CD14-positive monocyte (primary cell): ENCODE measurements at regions of chr12 and their contacts with region 1.

Region 1: GRCh38 chr12:107317751-107318613 is 224.6 kb upstream of the CRY1 start:
- DNase-seq: peak; percentile 87 to 92 (median 88)
- H3K4me3 ChIP-seq: peak overlapping the region; percentile 70 to 85 (median 81)
- H3K4me3 Mint-ChIP-seq: peak overlapping the region; percentile 89 to 95
- H3K27ac ChIP-seq: no peak overlapping the region
- H3K27ac Mint-ChIP-seq: peak overlapping the region in 6 of 7 donors; percentile 16 to 87 (median 62)
- H3K4me1 ChIP-seq: peaks cover 50 to 60% of the 10 kb centered on the region in 2 donors
- H3K4me1 Mint-ChIP-seq: peaks cover 42% of the 10 kb centered on the region
- H3K27me3 ChIP-seq: peaks cover 0 to 14% of the 10 kb centered on the region in 2 donors
- H3K27me3 Mint-ChIP-seq: peaks cover 28 to 40% (median 29%) of the 10 kb centered on the region in 3 donors
- CTCF ChIP-seq: peak; percentile 59

Region 2: GRCh38 chr12:107254258-107254856 is 63.6 kb before region 1 on chr12:
- intact Hi-C with region 1: no loop called
- DNase-seq: no peak
- H3K4me3 ChIP-seq: no peak overlapping the region
- H3K4me3 Mint-ChIP-seq: no peak overlapping the region
- H3K27ac ChIP-seq: no peak overlapping the region
- H3K27ac Mint-ChIP-seq: no peak overlapping the region
- H3K4me1 ChIP-seq: no peaks in the 10 kb centered on the region
- H3K4me1 Mint-ChIP-seq: no peaks in the 10 kb centered on the region
- H3K27me3 ChIP-seq: no peaks in the 10 kb centered on the region
- H3K27me3 Mint-ChIP-seq: peaks cover 0 to 6% (median 3%) of the 10 kb centered on the region in 3 donors
- CTCF ChIP-seq: no peak

Region 3: GRCh38 chr12:107264667-107265066 is 53.3 kb before region 1 on chr12:
- intact Hi-C with region 1: no loop called
- DNase-seq: no peak
- H3K4me3 ChIP-seq: no peak overlapping the region
- H3K4me3 Mint-ChIP-seq: no peak overlapping the region
- H3K27ac ChIP-seq: no peak overlapping the region
- H3K27ac Mint-ChIP-seq: no peak overlapping the region
- H3K4me1 ChIP-seq: no peaks in the 10 kb centered on the region
- H3K4me1 Mint-ChIP-seq: no peaks in the 10 kb centered on the region
- H3K27me3 ChIP-seq: no peaks in the 10 kb centered on the region
- H3K27me3 Mint-ChIP-seq: peaks cover 0 to 2% (median 1%) of the 10 kb centered on the region in 3 donors
- CTCF ChIP-seq: no peak

Region 4: DNA sequence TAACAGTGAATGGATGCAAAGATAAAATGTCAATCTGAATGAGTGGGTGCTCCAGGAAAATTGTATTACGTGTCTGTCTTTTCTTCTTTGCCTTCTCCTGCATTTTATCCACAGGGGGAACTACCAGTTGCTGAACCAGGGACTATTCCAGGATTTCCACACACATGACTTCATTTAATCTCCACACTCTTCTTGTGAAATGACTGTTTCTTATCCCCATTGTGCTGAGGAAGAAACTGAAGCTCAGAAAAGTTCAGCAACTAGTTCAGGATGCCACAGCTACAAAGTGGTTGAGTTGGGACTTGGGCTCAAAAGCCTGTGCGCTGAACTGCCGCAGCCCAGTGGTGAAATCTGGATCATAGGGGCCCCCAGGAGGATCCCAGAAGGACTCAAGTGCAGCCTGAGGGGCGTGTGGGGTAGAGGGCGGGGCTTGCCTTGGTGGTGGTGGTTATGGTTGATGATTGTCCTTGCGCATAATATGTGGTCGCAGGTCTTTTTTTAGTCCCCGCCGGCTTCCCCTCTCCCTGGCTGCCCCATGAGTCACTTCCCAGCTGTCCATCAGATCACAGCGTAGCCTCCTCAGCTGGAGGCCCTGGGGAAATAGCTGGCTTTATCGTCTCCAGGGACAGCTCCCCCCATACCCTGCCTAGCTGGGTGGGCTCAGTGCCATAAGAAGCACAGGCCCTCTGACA is 10.6 kb after region 1 on chr12:
- intact Hi-C with region 1: loop called in 1 of 2 experiments (anchors 1 kb)
- DNase-seq: peak; percentile 84 to 92 (median 85)
- H3K4me3 ChIP-seq: peak overlapping the region in 1 of 3 experiments; percentile 44
- H3K4me3 Mint-ChIP-seq: peak overlapping the region; percentile 34 to 42
- H3K27ac ChIP-seq: peak overlapping the region in 1 of 2 donors; percentile 62
- H3K27ac Mint-ChIP-seq: peak overlapping the region; percentile 72 to 93 (median 88)
- H3K4me1 ChIP-seq: peaks cover 30 to 44% of the 10 kb centered on the region in 2 donors
- H3K4me1 Mint-ChIP-seq: peaks cover 70% of the 10 kb centered on the region
- H3K27me3 ChIP-seq: peaks cover 0 to 3% of the 10 kb centered on the region in 2 donors
- H3K27me3 Mint-ChIP-seq: peaks cover 0 to 5% (median 4%) of the 10 kb centered on the region in 3 donors
- CTCF ChIP-seq: no peak

Region 5: GRCh38 chr12:107372229-107372658 is 54.3 kb after region 1 on chr12:
- intact Hi-C with region 1: loop called in 1 of 2 experiments (anchors 2 kb)
- DNase-seq: peak; percentile 47 to 79 (median 54)
- H3K4me3 ChIP-seq: peak overlapping the region in 1 of 3 experiments; percentile 11
- H3K4me3 Mint-ChIP-seq: peak overlapping the region; percentile 43 to 66
- H3K27ac ChIP-seq: peak overlapping the region; percentile 10 to 26
- H3K27ac Mint-ChIP-seq: peak overlapping the region in 6 of 7 donors; percentile 55 to 88 (median 60)
- H3K4me1 ChIP-seq: peaks cover 66 to 69% of the 10 kb centered on the region in 2 donors
- H3K4me1 Mint-ChIP-seq: peaks cover 65% of the 10 kb centered on the region
- H3K27me3 ChIP-seq: no peaks in the 10 kb centered on the region
- H3K27me3 Mint-ChIP-seq: peaks cover 0 to 6% (median 1%) of the 10 kb centered on the region in 3 donors
- CTCF ChIP-seq: no peak

Region 6: DNA sequence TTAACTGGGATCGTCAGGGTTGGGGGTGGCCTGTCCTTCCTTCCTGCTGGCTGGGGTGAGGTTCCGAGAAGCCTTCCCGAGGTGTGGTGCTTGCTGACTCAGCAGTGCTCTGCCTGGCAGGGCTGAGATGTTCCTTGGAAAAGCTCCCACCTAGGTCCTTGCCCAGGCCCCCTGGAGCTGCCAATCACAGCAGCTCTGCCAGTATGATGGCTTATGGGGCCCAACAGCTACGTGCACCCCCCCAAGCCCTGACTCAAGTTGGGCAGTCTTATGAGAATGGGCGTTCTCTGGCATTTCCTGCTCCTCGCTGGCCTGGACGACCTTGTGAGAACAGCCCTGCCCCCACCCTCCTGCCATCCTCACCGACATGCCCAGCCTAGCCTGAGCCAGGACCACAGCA is 67.5 kb after region 1 on chr12:
- intact Hi-C with region 1: no loop called
- DNase-seq: no peak
- H3K4me3 ChIP-seq: no peak overlapping the region
- H3K4me3 Mint-ChIP-seq: no peak overlapping the region
- H3K27ac ChIP-seq: no peak overlapping the region
- H3K27ac Mint-ChIP-seq: no peak overlapping the region
- H3K4me1 ChIP-seq: peaks cover 6 to 8% of the 10 kb centered on the region in 2 donors
- H3K4me1 Mint-ChIP-seq: peaks cover 18% of the 10 kb centered on the region
- H3K27me3 ChIP-seq: no peaks in the 10 kb centered on the region
- H3K27me3 Mint-ChIP-seq: peaks cover 0 to 5% (median 3%) of the 10 kb centered on the region in 3 donors
- CTCF ChIP-seq: no peak

Region 7: DNA sequence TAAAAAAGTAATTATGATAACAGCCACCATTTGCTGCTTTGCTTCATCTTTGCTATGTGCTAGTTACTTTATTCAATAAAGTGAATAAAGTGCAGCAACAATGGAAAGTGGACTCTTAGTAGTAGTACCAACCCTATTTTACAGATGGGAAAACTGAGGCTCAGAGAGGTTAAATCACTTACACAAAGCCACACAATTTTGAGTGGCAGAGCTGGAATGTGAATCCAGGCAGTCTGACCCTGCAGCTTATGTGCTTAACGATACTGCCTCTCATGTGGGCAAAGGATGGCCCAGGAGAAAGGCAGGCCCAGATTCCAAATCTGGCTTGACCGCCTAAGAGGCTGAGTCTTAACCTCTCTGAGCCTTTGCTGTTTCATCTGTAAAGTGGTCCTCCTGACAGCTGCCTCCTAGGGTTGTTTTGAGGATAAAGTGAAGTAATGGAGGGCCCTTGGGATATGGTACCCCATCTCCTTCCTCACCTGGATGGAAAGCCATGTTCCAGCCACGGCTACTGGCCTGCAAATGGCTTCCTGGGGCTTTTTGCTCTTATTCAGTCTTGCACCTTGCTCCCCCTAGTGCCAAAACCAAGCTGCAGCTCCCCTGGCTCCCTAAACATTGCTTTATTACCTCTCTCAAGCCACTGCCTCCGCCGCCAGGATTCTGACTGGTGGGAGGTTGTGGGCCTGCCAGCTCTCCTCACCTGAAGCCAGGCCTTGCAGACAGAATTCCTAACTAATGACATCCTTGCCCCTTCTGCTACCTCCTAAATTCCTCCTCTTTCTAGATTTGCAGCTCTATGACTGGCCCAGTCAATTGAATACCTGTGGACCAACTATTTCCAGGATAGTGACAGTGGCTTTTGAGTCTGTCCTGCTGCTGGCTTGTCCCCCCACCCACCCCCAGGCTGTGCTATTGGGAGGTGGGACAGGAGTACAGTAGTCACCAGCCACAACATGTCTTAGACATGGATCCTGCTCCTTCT is 84.3 kb after region 1 on chr12:
- intact Hi-C with region 1: loop called in 1 of 2 experiments (anchors 5 kb)
- DNase-seq: peak; percentile 36 to 59 (median 53)
- H3K4me3 ChIP-seq: no peak overlapping the region
- H3K4me3 Mint-ChIP-seq: no peak overlapping the region
- H3K27ac ChIP-seq: no peak overlapping the region
- H3K27ac Mint-ChIP-seq: peak overlapping the region in 1 of 7 donors; percentile 41
- H3K4me1 ChIP-seq: peaks cover 11 to 13% of the 10 kb centered on the region in 2 donors
- H3K4me1 Mint-ChIP-seq: peaks cover 17% of the 10 kb centered on the region
- H3K27me3 ChIP-seq: no peaks in the 10 kb centered on the region
- H3K27me3 Mint-ChIP-seq: no peaks in the 10 kb centered on the region
- CTCF ChIP-seq: peak; percentile 79

Region 8: DNA sequence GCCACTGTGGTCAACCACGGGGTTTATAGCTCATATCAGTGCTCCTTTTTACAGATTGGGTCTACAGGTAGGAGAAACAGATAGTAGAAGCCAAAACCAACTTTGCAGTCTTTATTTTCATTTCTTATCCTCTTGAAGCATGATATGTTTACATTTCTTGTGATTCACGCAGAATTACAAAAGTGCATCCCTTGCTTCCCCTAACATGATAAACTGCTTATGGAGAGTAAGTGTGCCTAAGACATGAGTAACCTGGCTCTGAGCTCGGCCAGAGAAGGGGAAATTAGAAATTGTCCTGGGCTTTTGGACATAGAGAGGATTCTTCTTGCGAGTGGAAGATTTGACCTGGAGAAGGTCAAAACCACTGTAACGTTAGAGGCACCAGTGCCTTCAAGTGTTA is 386.1 kb after region 1 on chr12:
- intact Hi-C with region 1: no loop called
- DNase-seq: no peak
- H3K4me3 ChIP-seq: no peak overlapping the region
- H3K4me3 Mint-ChIP-seq: no peak overlapping the region
- H3K27ac ChIP-seq: no peak overlapping the region
- H3K27ac Mint-ChIP-seq: no peak overlapping the region
- H3K4me1 ChIP-seq: no peaks in the 10 kb centered on the region
- H3K4me1 Mint-ChIP-seq: no peaks in the 10 kb centered on the region
- H3K27me3 ChIP-seq: no peaks in the 10 kb centered on the region
- H3K27me3 Mint-ChIP-seq: no peaks in the 10 kb centered on the region
- CTCF ChIP-seq: no peak